CD8-positive, alpha-beta T cell (primary cell): ENCODE measurements at regions of chr9 and their contacts with region 1.

Region 1: DNA sequence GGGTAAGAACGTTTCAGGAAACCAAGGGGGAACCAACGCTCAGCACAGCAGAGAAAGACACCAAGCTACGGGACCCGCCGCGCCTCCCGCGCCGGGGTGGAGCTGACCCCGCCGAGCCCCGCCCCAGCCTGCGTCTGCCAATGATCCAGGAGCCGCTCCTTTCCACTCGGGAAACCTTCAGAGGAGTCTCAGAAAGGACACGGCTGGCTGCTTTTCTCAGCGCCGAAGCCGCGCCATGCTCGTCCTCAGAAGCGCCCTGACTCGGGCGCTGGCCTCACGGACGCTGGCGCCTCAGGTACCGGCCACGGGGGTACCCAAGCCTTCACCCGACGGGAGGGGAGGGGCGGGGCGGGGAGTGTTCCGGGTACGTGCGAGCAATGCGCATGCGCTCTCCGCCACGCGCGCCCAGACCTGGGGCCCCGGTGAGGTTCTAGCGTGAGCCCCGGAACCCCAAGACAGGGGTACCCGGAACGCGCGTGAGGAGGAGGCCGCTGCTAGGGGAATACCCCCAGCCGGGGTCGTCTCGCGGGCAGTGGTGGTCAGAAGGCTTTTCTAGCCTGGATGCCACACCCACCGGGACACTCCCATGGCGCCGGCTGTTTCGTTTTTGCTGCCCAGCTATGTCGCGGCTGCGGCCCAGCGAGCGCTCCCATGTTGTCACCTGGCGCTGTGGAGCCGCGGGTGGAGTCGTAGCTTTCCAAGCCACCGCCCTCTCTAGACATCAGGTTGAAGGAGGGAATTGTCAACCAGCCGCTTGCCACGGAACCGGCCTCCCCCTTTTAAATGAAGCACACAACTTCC is at the start of gene NIPSNAP3A:
- DNase-seq: peak; percentile 76 to 96 (median 87)
- ATAC-seq: peak; percentile 87
- H3K4me3 ChIP-seq: peak within 1 kb of the TSS; percentile 74 to 94
- H3K4me3 Mint-ChIP-seq: peak within 1 kb of the TSS; percentile 99
- H3K27ac ChIP-seq: peak within 1 kb of the TSS; percentile 82 to 93
- H3K27ac Mint-ChIP-seq: peak within 1 kb of the TSS; percentile 99
- H3K4me1 ChIP-seq: peaks cover 6% of the 10 kb centered on the region
- H3K4me1 Mint-ChIP-seq: peaks cover 20% of the 10 kb centered on the region
- H3K27me3 ChIP-seq: no peaks in the 10 kb centered on the region
- H3K27me3 Mint-ChIP-seq: no peaks in the 10 kb centered on the region
- CTCF ChIP-seq: no peak
- total RNA-seq, gene NIPSNAP3A: 9.2 to 9.5 TPM

Region 2: DNA sequence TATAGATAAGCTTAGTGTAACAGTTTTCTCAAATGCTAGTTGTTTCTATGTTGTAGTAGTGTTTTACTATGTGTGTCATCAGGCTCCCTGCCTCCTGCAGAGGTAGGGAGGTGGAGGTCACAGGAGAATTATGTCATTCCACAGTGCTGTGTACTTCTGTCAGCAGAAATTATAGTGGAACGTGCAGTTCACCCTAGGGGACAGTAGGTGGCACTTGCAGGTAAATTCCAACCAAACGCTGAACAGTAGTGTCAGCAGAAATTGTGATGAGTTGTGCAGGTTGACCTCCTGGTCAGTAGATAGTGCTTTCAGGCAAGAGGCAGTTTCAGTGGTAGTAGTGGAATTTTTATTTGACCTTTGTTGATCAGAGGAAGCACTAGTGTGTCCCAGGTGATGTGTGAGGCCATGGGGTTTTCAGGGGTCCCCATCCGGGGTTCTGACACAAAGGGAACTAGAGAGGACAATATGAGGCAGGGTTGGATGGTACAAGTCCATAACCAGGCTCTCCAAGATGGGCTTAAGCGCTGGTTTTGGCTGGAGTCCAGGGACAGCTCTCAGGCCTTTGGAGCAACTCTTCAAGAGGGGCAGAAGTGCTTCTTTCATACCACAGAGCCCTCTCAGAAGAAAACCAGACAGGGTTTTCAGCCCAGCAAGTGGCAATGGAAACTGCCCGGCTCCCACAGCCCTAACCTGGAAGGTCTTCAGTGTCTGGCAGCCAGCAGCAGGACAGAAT is 1349.7 kb before region 1 on chr9:
- CTCF ChIA-PET with region 1: no interaction called
- POLR2A ChIA-PET with region 1: no interaction called
- intact Hi-C with region 1: loop called in 1 of 2 experiments (anchors 5 kb)
- DNase-seq: peak in 4 of 9 experiments; percentile 7 to 31 (median 17)
- ATAC-seq: no peak
- H3K4me3 ChIP-seq: no peak overlapping the region
- H3K4me3 Mint-ChIP-seq: no peak overlapping the region
- H3K27ac ChIP-seq: no peak overlapping the region
- H3K27ac Mint-ChIP-seq: no peak overlapping the region
- H3K4me1 ChIP-seq: no peaks in the 10 kb centered on the region
- H3K4me1 Mint-ChIP-seq: no peaks in the 10 kb centered on the region
- H3K27me3 ChIP-seq: no peaks in the 10 kb centered on the region
- H3K27me3 Mint-ChIP-seq: peaks cover 3% of the 10 kb centered on the region
- CTCF ChIP-seq: peak; percentile 41

Region 3: DNA sequence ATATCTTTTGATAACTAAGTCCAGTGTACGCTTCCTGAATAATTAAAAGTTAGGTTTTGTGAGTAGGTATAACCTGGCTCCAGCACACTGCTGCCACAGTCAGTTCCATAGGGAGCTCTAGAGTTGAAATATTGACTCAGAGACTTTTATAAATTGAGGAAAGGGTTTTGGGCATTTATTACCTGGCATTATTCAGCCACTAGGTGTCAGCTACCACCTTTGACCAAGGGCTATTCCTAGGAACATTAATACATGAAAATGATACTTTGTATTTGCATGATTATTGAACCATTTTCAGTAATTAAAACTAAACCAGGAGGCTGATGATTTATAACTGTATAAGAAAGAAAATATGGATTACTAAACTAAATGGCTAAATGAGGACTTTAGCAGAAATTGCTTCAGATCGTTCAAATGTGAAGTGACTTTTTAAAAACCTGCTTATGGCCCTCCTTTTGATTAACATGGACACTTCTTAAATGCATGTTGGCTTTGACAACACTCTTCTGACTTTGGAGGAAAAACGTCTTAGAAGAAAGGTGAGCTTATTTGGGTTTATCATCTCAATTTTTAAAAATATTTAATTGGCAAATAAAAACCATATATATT is 570.7 kb before region 1 on chr9:
- CTCF ChIA-PET with region 1: interaction called, 3 read pairs
- POLR2A ChIA-PET with region 1: no interaction called
- intact Hi-C with region 1: loop called in 1 of 2 experiments (anchors 2 kb)
- DNase-seq: peak in 1 of 9 experiments; percentile 4
- ATAC-seq: no peak
- H3K4me3 ChIP-seq: no peak overlapping the region
- H3K4me3 Mint-ChIP-seq: no peak overlapping the region
- H3K27ac ChIP-seq: no peak overlapping the region
- H3K27ac Mint-ChIP-seq: no peak overlapping the region
- H3K4me1 ChIP-seq: no peaks in the 10 kb centered on the region
- H3K4me1 Mint-ChIP-seq: no peaks in the 10 kb centered on the region
- H3K27me3 ChIP-seq: no peaks in the 10 kb centered on the region
- H3K27me3 Mint-ChIP-seq: peaks cover 5% of the 10 kb centered on the region
- CTCF ChIP-seq: no peak

Region 4: GRCh38 chr9:104968025-104968982 is 220.5 kb after region 1 on chr9:
- CTCF ChIA-PET with region 1: no interaction called
- POLR2A ChIA-PET with region 1: no interaction called
- intact Hi-C with region 1: loop called (anchors 5 kb)
- DNase-seq: peak; percentile 77 to 91 (median 88)
- ATAC-seq: peak; percentile 98
- H3K4me3 ChIP-seq: peak overlapping the region; percentile 80 to 86
- H3K4me3 Mint-ChIP-seq: peak overlapping the region; percentile 91
- H3K27ac ChIP-seq: peak overlapping the region; percentile 11 to 47
- H3K27ac Mint-ChIP-seq: peak overlapping the region; percentile 73
- H3K4me1 ChIP-seq: peaks cover 14% of the 10 kb centered on the region
- H3K4me1 Mint-ChIP-seq: peaks cover 13% of the 10 kb centered on the region
- H3K27me3 ChIP-seq: peaks cover 0 to 4% of the 10 kb centered on the region in 2 experiments
- H3K27me3 Mint-ChIP-seq: peaks cover 5% of the 10 kb centered on the region
- CTCF ChIP-seq: no peak

Region 5: GRCh38 chr9:105127863-105128220 is 380.1 kb after region 1 on chr9:
- CTCF ChIA-PET with region 1: no interaction called
- POLR2A ChIA-PET with region 1: no interaction called
- intact Hi-C with region 1: loop called in 1 of 2 experiments (anchors 5 kb)
- DNase-seq: peak; percentile 25 to 89 (median 58)
- ATAC-seq: peak; percentile 99
- H3K4me3 ChIP-seq: peak overlapping the region in 1 of 2 experiments; percentile 6
- H3K4me3 Mint-ChIP-seq: peak overlapping the region; percentile 56
- H3K27ac ChIP-seq: no peak overlapping the region
- H3K27ac Mint-ChIP-seq: peak overlapping the region; percentile 46
- H3K4me1 ChIP-seq: peaks cover 40% of the 10 kb centered on the region
- H3K4me1 Mint-ChIP-seq: peaks cover 48% of the 10 kb centered on the region
- H3K27me3 ChIP-seq: no peaks in the 10 kb centered on the region
- H3K27me3 Mint-ChIP-seq: peaks cover 2% of the 10 kb centered on the region
- CTCF ChIP-seq: peak; percentile 23

Region 6: GRCh38 chr9:105405514-105406131 is 657.9 kb after region 1 on chr9:
- CTCF ChIA-PET with region 1: no interaction called
- POLR2A ChIA-PET with region 1: no interaction called
- intact Hi-C with region 1: loop called in 1 of 2 experiments (anchors 2 kb)
- DNase-seq: peak; percentile 25 to 90 (median 57)
- ATAC-seq: peak; percentile 89
- H3K4me3 ChIP-seq: peak overlapping the region; percentile 3 to 12
- H3K4me3 Mint-ChIP-seq: peak overlapping the region; percentile 63
- H3K27ac ChIP-seq: no peak overlapping the region
- H3K27ac Mint-ChIP-seq: peak overlapping the region; percentile 74
- H3K4me1 ChIP-seq: peaks cover 23% of the 10 kb centered on the region
- H3K4me1 Mint-ChIP-seq: peaks cover 30% of the 10 kb centered on the region
- H3K27me3 ChIP-seq: peaks cover 17 to 30% of the 10 kb centered on the region in 2 experiments
- H3K27me3 Mint-ChIP-seq: peaks cover 48% of the 10 kb centered on the region
- CTCF ChIP-seq: no peak

Region 7: GRCh38 chr9:105694190-105694847 is 946.6 kb after region 1 on chr9 and contains the start of gene TMEM38B:
- CTCF ChIA-PET with region 1: no interaction called
- POLR2A ChIA-PET with region 1: no interaction called
- intact Hi-C with region 1: loop called (anchors 1 to 2 kb)
- DNase-seq: peak; percentile 54 to 91 (median 73)
- ATAC-seq: peak; percentile 90
- H3K4me3 ChIP-seq: peak within 1 kb of the TSS; percentile 69 to 78
- H3K4me3 Mint-ChIP-seq: peak within 1 kb of the TSS; percentile 90
- H3K27ac ChIP-seq: peak within 1 kb of the TSS; percentile 20 to 58
- H3K27ac Mint-ChIP-seq: peak within 1 kb of the TSS; percentile 73
- H3K4me1 ChIP-seq: peaks cover 15% of the 10 kb centered on the region
- H3K4me1 Mint-ChIP-seq: peaks cover 32% of the 10 kb centered on the region
- H3K27me3 ChIP-seq: peaks cover 0 to 13% of the 10 kb centered on the region in 2 experiments
- H3K27me3 Mint-ChIP-seq: peaks cover 32% of the 10 kb centered on the region
- CTCF ChIP-seq: no peak
- total RNA-seq, gene TMEM38B: 9.5 to 14.1 TPM